Mammary epithelial cell (primary cell): ENCODE measurements at regions of chr11 and their contacts with region 1.

Region 1: GRCh38 chr11:61912530-61912898 is 4.9 kb downstream of the RAB3IL1 start:
- DNase-seq: no peak
- H3K4me3 ChIP-seq: no peak overlapping the region
- H3K27ac ChIP-seq: no peak overlapping the region
- H3K4me1 ChIP-seq: peaks cover 5% of the 10 kb centered on the region
- H3K27me3 ChIP-seq: peaks cover under 1% of the 10 kb centered on the region
- CTCF ChIP-seq: no peak

Region 2: DNA sequence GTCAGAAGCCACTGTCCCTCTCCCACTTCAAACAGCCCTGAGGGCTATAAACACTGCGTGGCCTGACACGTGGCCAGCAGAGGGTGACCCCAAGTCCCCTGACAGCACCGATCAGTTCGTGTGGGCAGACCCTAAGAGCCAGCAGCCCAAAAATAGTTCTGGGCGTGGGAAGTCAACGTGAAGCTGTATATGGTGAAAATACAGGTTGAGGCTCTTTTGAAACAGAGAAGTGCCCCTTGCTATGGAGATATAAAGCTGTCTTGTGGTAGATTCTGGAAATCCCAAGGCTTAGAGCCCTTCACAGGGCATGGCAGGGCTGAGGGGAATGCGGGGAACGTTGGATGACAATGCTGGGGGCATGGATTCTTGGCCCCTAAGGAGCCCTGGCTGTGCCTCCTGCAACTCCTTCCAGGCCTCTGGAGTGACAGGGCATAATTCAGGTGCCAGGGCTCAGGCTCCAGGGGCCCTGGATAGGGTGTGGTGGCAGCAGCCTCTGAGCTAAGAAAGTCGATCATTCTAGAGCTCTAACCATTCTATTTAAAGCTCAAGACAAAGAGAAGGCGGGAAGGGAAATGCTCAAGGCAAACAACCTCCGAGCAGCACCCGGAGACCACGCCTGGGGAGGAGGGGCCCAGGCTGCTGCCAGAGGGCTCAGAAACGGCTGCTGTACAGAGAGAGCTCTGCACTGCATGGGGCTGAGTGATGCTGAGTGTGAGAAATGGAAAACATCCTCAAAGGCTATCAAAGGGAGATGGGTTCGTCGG is 870.6 kb before region 1 on chr11:
- CTCF ChIA-PET with region 1: no interaction called
- dilution Hi-C with region 1: no loop called
- in situ Hi-C with region 1: no loop called
- intact Hi-C with region 1: no loop called
- DNase-seq: no peak
- H3K4me3 ChIP-seq: no peak overlapping the region
- H3K27ac ChIP-seq: no peak overlapping the region
- H3K4me1 ChIP-seq: peaks cover 7% of the 10 kb centered on the region
- H3K27me3 ChIP-seq: no peaks in the 10 kb centered on the region
- CTCF ChIP-seq: no peak

Region 3: DNA sequence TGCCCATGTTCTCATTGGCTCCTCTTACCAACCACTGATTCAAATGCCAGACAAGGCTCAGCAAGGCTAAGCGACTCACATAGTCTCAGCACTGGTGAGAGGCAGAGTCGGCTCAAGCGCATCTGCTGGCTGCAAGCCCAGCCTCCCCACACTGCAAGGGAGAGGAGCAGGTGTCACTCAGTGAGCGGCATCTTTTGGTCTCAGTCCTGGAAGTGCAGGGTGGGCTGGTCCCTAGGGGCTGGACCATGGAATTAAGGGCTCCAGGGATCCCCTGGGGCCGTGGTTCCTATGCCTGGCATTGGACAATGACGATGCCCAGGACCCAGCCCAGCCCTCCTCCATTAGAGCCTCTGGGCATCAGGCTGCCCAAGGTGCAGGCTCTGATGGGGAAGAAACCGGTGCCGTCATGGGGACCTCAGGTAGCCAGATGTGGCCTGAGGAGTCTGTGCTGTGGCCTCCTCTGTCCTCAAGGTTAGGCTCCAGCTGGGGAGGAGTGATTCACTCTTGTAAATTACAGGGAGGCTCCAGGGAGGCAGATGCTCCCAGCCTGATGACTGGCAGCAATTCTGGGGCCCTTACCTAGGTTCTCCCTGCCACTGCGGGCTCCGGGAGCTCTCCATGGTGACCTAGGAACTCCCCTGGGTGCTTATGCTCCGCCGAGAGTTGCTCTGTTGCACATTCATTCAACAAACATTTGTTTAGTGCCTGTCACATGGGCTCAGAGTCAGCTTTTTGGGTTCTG is 56.4 kb before region 1 on chr11:
- CTCF ChIA-PET with region 1: no interaction called
- dilution Hi-C with region 1: loop called (anchors 5 kb)
- in situ Hi-C with region 1: no loop called
- intact Hi-C with region 1: no loop called
- DNase-seq: no peak
- H3K4me3 ChIP-seq: no peak overlapping the region
- H3K27ac ChIP-seq: no peak overlapping the region
- H3K4me1 ChIP-seq: no peaks in the 10 kb centered on the region
- H3K27me3 ChIP-seq: no peaks in the 10 kb centered on the region
- CTCF ChIP-seq: no peak